Tibial artery (tissue), 4 donors: ENCODE measurements at regions of chr7 and their contacts with region 1.

Region 1: GRCh38 chr7:99504603-99505323 is at the start of gene ZKSCAN5:
- DNase-seq: peak; percentile 98 to 99
- H3K4me3 ChIP-seq: peak within 1 kb of the TSS; percentile 60 to 68
- H3K27ac ChIP-seq: peak within 1 kb of the TSS; percentile 78 to 95
- H3K4me1 ChIP-seq: peaks cover 5 to 40% (median 26%) of the 10 kb centered on the region in 4 donors
- H3K27me3 ChIP-seq: no peaks in the 10 kb centered on the region
- CTCF ChIP-seq: no peak

Region 2: DNA sequence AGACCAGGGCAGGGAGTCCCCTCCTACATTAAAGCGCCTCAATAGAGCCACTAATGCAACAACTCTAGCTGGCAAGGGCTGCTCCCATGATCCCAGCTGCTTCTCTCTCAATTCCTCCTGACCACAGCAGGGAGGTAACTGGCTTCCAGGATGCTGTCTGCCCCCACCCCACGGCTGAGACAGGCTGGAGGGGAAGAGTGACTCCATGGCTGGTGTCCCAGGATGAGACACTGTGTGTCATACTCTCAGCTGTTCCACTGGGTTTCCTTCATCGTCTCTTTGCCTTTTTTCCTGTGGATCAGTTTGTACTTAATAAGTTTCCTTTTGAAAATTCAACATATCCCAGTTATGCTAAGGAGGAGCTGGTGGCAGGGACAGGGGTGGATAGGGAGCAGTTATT is 259.8 kb before region 1 on chr7:
- intact Hi-C with region 1: no loop called
- DNase-seq: no peak
- H3K4me3 ChIP-seq: no peak overlapping the region
- H3K27ac ChIP-seq: no peak overlapping the region
- H3K4me1 ChIP-seq: no peaks in the 10 kb centered on the region
- H3K27me3 ChIP-seq: no peaks in the 10 kb centered on the region
- CTCF ChIP-seq: no peak

Region 3: DNA sequence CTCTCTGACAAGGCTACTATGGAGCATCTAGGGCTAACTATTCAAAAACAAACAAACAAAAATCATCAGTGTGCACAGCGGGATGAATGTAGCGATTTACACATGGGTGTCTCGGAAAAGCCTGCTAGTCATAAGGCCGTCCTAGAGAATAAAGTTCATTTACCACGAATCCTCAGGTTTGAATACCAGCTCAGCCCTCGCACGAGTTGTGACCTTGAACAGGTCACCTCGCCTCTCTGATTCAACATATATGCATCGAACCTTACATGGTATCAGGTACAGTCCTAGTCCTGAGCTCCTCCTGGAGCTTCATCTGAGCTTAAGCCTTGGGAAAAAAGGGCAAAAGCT is 39.4 kb before region 1 on chr7:
- intact Hi-C with region 1: loop called (anchors 5 kb)
- DNase-seq: no peak
- H3K4me3 ChIP-seq: peak overlapping the region; percentile 73 to 75
- H3K27ac ChIP-seq: peak overlapping the region; percentile 85
- H3K4me1 ChIP-seq: peaks cover 0 to 41% (median 25%) of the 10 kb centered on the region in 4 donors
- H3K27me3 ChIP-seq: no peaks in the 10 kb centered on the region
- CTCF ChIP-seq: no peak

Region 4: GRCh38 chr7:99558306-99559174 is 53.8 kb after region 1 on chr7 and contains the start of gene ZNF655:
- intact Hi-C with region 1: loop called (anchors 5 kb)
- DNase-seq: peak; percentile 93 to 96
- H3K4me3 ChIP-seq: peak within 1 kb of the TSS; percentile 86 to 88
- H3K27ac ChIP-seq: peak within 1 kb of the TSS; percentile 97
- H3K4me1 ChIP-seq: peaks cover 0 to 38% (median 27%) of the 10 kb centered on the region in 4 donors
- H3K27me3 ChIP-seq: no peaks in the 10 kb centered on the region
- CTCF ChIP-seq: no peak